Mammary epithelial cell (primary cell): ENCODE measurements at regions of chr17 and their contacts with region 1.

Region 1: GRCh38 chr17:60804831-60805230 is 127.2 kb downstream of the BCAS3 start:
- DNase-seq: peak; percentile 1
- H3K4me3 ChIP-seq: no peak overlapping the region
- H3K27ac ChIP-seq: no peak overlapping the region
- H3K4me1 ChIP-seq: no peaks in the 10 kb centered on the region
- H3K27me3 ChIP-seq: no peaks in the 10 kb centered on the region
- CTCF ChIP-seq: no peak

Region 2: GRCh38 chr17:60729854-60730253 is 75.0 kb before region 1 on chr17:
- CTCF ChIA-PET with region 1: no interaction called
- dilution Hi-C with region 1: no loop called
- in situ Hi-C with region 1: no loop called
- intact Hi-C with region 1: no loop called
- DNase-seq: no peak
- H3K4me3 ChIP-seq: no peak overlapping the region
- H3K27ac ChIP-seq: no peak overlapping the region
- H3K4me1 ChIP-seq: no peaks in the 10 kb centered on the region
- H3K27me3 ChIP-seq: no peaks in the 10 kb centered on the region
- CTCF ChIP-seq: no peak

Region 3: DNA sequence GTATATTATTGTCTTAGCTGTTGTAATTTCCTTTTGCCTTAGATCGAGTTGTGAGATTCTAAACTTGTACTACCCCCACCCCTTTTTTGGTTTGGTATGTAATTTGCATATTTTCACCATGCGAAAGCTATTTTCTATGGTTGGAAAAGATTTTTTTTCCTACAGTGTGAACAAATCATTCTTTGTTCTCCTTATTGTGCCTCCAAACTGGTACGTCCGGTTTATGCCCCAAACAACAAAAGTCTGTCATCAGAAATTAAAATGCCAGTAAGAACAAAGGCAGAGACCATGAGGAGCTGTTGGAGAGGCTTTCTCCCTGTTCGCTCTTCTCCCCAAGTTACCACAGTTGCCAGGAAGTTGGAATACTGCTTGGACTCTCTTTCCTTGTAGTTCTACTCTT is 61.0 kb before region 1 on chr17:
- CTCF ChIA-PET with region 1: no interaction called
- dilution Hi-C with region 1: no loop called
- in situ Hi-C with region 1: no loop called
- intact Hi-C with region 1: no loop called
- DNase-seq: peak; percentile 78
- H3K4me3 ChIP-seq: peak overlapping the region; percentile 20 to 45 (median 36)
- H3K27ac ChIP-seq: peak overlapping the region; percentile 86
- H3K4me1 ChIP-seq: peaks cover 5% of the 10 kb centered on the region
- H3K27me3 ChIP-seq: no peaks in the 10 kb centered on the region
- CTCF ChIP-seq: no peak

Region 4: DNA sequence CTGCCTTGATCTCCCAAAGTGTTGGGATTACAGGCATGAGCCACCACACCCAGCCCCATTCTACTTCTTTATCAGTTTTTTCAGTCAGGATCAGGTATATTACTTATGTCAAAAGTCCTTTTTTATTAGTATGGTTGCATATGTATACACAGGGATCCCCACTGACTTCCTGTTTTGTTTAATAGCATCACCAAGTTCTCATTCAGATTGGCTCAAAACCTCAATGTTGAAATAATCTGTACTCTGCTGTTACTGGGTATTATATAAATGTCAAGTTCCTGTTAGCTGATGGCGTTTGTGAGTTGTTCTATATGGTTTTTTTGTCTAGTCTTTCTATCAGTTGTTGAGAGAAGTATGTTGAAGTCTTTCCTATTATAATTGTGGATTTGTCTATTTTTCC is 41.3 kb after region 1 on chr17:
- CTCF ChIA-PET with region 1: interaction called, 11 read pairs
- dilution Hi-C with region 1: no loop called
- in situ Hi-C with region 1: no loop called
- intact Hi-C with region 1: no loop called
- DNase-seq: no peak
- H3K4me3 ChIP-seq: no peak overlapping the region
- H3K27ac ChIP-seq: no peak overlapping the region
- H3K4me1 ChIP-seq: peaks cover 7% of the 10 kb centered on the region
- H3K27me3 ChIP-seq: no peaks in the 10 kb centered on the region
- CTCF ChIP-seq: no peak